ENCODE measurements at regions of chr10 and their contacts with region 1.

Region 1: DNA sequence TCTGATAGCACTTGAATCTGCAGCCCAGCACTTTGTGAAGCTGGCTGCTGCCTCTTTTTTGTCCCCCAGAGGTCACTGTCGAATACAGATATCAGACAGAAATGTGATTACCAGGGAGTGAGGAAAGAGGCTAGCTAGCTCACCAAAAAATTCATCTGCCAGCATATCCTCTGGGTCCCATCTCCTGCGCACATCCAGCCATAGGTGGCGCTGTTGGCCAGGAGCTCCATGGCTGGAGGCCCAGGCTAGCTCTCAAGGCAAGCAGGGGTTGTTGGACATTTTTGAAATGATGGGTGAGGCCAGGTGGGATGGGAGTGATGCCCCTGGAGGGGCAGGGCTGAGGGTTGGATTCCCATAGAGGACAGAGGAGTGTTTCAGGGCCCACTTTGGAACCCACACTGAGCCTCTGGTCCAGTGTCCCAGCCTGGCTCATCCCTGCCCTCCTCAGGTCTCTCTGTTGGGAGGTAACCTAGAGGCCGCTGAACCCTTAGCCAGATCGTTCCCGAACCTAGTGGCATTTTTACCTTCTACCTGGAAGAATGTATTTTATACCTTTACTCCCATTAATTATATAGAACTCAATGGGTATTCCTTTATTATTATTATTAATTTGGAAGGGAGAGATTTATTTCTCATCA is 14.8 kb downstream of the DPCD start:
- DNase-seq: peak; percentile 84
- H3K4me3 ChIP-seq: peak overlapping the region in 1 of 2 experiments; percentile 24; a peak in 1 of 4 replicates
- H3K27ac ChIP-seq: no peak overlapping the region; a peak in 1 of 4 replicates
- H3K4me1 ChIP-seq: no peaks in the 10 kb centered on the region; a peak in 1 of 4 replicates
- H3K27me3 ChIP-seq: no peaks in the 10 kb centered on the region
- CTCF ChIP-seq: peak; percentile 90
- EP300 ChIP-seq: no peak
- RAD21 ChIP-seq: peak; percentile 92

Region 2: DNA sequence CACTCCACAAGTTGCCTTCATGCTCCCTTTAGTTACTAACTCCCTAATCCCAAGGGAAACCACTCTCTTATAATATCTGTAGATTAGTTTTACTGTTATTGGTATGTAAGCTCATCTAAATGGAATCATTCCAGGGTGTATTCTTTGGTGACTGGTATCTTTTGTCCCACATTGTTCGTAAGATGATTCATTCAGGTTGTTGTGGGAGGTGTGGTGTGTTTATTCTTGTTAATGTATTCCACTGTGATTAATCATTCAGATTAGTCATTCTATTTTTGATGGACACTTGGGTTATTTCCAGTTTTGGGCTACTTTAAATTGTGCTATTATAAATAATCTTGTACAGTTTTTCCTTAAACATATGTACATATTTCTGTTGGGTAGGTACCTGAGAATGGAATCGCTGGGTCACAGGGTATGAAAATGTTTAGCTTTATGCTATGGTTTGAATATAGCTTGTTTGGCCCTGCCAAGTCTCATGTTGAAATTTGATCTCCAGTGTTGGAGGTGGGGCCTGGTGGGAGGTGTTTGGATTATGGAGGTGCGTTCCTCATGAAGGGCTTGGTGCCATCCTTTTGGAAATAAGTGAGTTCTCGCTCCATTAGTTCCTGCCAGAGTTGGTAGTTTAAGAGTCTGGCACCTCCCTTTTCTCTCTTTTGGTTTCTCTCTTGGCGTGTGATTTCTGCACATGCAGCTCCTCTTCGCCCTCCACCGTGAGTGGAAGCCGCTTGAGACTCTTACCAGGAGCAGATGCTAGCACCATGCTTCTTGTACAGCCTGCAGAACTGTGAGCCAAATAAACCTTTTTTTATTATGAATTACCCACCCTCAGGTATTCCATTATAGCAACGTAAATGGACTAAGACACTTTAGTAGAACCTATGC is 235.1 kb before region 1 on chr10:
- CTCF ChIA-PET with region 1: no interaction called
- POLR2A ChIA-PET with region 1: no interaction called
- DNase-seq: no peak
- H3K4me3 ChIP-seq: no peak overlapping the region
- H3K27ac ChIP-seq: peak overlapping the region in 1 of 2 experiments; percentile 57; a peak in 2 of 4 replicates
- H3K4me1 ChIP-seq: peaks cover 0 to 16% of the 10 kb centered on the region in 2 experiments; a peak in 1 of 4 replicates
- H3K27me3 ChIP-seq: no peaks in the 10 kb centered on the region
- CTCF ChIP-seq: no peak
- EP300 ChIP-seq: no peak
- RAD21 ChIP-seq: no peak

Region 3: GRCh38 chr10:101617102-101617823 is 14.4 kb after region 1 on chr10:
- CTCF ChIA-PET with region 1: interaction called, 61 read pairs
- POLR2A ChIA-PET with region 1: no interaction called
- DNase-seq: peak; percentile 52
- H3K4me3 ChIP-seq: no peak overlapping the region
- H3K27ac ChIP-seq: peak overlapping the region in 1 of 2 experiments; percentile 76; a peak in 2 of 4 replicates
- H3K4me1 ChIP-seq: peaks cover 0 to 54% of the 10 kb centered on the region in 2 experiments; a peak in 2 of 4 replicates
- H3K27me3 ChIP-seq: no peaks in the 10 kb centered on the region
- CTCF ChIP-seq: no peak
- EP300 ChIP-seq: no peak
- RAD21 ChIP-seq: no peak

Region 4: DNA sequence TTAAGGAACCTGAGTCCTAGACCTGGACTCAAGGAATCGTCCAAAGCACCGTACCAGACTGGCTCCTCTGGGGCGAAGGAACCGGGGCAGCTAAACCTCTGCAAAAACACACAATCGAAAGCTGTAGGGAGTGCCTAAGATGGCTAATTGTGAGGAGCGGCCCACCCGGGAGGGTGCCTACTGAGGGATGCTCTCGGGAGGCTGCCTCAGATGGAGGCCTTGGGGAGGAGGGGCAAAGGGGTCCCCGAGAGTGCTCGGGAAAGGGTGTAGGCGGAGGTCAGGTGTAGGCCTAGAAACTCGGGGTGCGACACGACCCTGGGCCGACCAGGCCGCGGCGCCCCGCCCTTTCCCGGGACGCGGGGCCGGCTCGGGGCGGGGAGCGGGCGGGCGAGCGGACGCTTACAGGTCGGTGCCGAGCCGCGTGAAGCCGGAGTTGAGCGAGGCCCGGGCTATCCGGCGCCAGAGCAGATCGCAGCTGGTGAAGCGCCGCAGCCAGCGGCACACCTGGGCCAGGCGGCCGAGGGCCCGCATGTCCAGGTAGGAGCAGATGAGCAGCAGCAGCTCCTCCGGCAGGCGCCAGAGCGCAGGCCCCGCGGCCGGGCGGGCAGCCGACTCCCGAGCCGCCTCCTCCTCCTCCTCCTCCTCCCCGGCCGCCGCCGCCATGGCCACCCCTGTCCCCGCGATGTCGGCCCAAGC is 91.2 kb after region 1 on chr10:
- CTCF ChIA-PET with region 1: interaction called, 15 read pairs
- POLR2A ChIA-PET with region 1: no interaction called
- DNase-seq: peak; percentile 84
- H3K4me3 ChIP-seq: peak overlapping the region; percentile 59 to 84
- H3K27ac ChIP-seq: peak overlapping the region; percentile 83 to 94
- H3K4me1 ChIP-seq: peaks cover 16 to 25% of the 10 kb centered on the region in 2 experiments
- H3K27me3 ChIP-seq: no peaks in the 10 kb centered on the region
- CTCF ChIP-seq: no peak
- EP300 ChIP-seq: no peak
- RAD21 ChIP-seq: no peak

Region 5: GRCh38 chr10:101782811-101783735 is 180.2 kb after region 1 on chr10 and contains the start of gene NPM3:
- CTCF ChIA-PET with region 1: interaction called, 297 read pairs
- POLR2A ChIA-PET with region 1: interaction called, 10 read pairs
- DNase-seq: peak; percentile 94
- H3K4me3 ChIP-seq: peak within 1 kb of the TSS; percentile 77 to 96
- H3K27ac ChIP-seq: peak within 1 kb of the TSS; percentile 70 to 72
- H3K4me1 ChIP-seq: peaks cover 8 to 23% of the 10 kb centered on the region in 2 experiments; a peak in 3 of 4 replicates
- H3K27me3 ChIP-seq: no peaks in the 10 kb centered on the region
- CTCF ChIP-seq: no peak
- EP300 ChIP-seq: no peak
- RAD21 ChIP-seq: no peak
- polyA plus RNA-seq, gene NPM3: 89.3 and 105 TPM in 2 replicates

Measured in SK-N-SH (cell line).